Mucosa of descending colon (tissue), 3 donors: ENCODE measurements at regions of chr16 and their contacts with region 1.

Region 1: DNA sequence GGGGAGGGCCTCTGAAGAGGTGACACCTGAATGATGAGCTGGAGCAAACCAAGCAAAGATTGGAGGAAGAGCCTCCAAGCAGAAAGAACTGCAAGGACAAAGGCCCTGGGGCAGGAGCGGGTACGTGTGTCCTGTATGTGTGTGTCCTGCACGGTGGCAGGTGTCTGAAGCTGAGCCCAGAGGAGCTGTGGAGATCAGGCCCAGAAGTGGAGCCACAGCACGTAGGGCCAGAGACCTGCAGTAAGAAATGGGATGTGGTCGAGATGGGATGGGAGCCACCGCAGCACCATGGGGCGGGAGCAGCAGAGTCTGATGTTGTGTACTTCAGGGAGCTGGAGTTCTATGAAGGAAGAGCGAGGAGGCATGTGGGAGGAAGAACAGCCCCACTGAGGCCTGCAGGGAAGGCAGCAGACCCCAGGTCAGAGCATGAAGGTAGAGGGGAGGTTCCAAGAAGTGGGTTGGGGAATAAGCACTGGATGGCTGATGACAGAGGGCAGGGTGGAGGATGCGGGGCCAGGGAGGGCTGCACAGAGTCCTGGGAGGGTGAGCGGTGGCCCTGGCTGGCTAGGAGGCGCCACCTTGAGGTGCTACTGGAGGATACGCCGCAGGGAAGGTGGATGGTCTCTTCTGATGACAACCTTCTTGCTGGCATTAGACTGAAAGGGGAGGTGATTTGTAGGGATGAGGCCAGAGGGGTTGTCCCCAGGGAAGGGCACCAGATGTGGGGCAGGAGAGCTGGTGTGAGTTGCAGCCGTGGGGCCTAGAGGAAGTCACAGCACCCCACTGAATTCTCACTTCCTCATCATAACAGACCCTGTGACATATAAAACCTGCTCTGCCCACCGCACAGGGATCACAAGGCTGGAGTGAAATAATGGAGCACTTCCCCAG is 10.6 kb upstream of the CETP start:
- DNase-seq: peak in 2 of 3 donors; percentile 52 to 57
- ATAC-seq: peak; percentile 78
- H3K4me3 ChIP-seq: no peak overlapping the region
- H3K4me1 ChIP-seq: no peaks in the 10 kb centered on the region
- CTCF ChIP-seq: peak; percentile 34

Region 2: DNA sequence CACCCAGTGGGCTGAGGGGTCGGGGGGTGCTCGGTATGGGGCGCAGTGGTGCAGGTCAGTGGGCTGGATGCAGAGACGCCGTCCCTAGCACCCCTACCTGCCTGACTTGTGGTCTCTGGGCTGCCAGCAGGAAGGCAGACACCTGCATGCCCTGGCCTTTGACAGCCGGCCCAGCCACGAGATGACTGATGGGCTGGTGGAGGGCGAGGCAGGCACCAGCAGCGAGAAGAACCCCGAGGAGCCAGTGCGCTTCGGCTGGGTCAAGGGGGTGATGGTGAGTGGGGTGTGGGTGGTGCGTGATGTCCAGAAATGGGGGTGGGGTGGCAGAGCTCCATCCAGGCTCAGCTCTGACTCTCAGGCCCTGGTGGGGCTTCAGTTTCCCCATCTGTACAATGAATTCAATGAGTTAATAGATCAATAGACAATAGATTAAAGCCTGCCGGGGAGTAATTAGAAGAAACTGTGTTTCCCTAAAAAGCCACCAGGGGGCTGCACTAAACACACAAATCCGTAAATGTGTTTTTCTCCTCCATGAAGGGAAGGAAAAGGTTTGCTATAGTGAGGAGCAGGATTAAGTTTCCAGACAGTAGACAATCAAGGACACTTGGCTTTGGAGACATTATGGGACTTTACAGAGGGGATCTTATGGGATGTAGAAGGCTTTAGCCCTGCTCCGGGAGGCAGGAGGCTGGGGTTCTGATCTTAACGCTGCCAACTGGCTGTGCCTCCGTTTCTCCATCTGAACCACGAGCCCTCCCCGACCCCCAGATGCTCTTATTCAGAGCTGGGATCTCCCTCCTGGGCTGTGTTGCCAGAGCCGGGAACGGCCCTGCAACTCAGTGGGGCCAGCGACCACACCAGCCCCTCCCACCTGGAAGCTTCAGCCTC is 83.9 kb before region 1 on chr16:
- intact Hi-C with region 1: loop called in 1 of 2 experiments (anchors 5 kb)
- DNase-seq: peak in 1 of 3 donors; percentile 78
- ATAC-seq: peak; percentile 42
- H3K4me3 ChIP-seq: no peak overlapping the region
- H3K4me1 ChIP-seq: no peaks in the 10 kb centered on the region
- CTCF ChIP-seq: peak; percentile 67

Region 3: DNA sequence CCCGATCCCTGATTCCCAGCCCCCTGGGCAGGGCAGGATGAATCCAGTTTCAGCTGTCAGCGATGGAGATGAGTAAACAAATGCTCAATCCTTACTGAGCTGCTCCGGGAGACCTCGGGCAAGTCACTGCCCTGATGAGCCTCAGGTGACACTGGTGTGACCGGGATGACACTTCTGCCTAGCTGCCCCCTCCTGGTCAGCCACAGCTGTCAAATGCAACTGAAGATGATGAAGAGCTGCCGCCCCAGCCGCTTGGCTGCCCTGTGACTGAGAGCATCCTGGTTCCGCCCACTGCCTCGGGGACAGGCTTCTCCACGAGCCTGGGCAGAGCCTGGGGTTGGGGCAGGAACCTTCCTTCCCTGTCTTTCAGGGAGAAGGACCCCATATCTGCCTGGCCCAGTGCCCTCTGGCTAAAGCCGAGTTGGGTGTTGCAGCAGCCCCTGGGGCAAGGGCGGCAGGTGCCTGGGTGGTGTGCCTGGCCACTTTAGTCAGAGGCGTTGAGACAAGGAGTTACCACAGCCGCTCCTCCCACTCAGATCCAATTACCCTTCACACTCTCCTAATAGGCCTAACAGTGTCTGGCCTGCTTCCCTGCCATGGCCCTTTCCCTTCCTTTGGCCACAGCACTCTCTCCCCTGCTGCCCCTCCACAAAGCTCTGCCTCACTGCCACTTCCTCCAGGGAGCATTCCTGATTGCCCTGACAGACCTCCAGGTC is 458.9 kb after region 1 on chr16:
- intact Hi-C with region 1: no loop called
- DNase-seq: no peak
- ATAC-seq: no peak
- H3K4me3 ChIP-seq: no peak overlapping the region
- H3K4me1 ChIP-seq: no peaks in the 10 kb centered on the region
- CTCF ChIP-seq: no peak